Esophagus squamous epithelium (tissue), 5 donors: ENCODE measurements at regions of chr20 and their contacts with region 1.

Region 1: DNA sequence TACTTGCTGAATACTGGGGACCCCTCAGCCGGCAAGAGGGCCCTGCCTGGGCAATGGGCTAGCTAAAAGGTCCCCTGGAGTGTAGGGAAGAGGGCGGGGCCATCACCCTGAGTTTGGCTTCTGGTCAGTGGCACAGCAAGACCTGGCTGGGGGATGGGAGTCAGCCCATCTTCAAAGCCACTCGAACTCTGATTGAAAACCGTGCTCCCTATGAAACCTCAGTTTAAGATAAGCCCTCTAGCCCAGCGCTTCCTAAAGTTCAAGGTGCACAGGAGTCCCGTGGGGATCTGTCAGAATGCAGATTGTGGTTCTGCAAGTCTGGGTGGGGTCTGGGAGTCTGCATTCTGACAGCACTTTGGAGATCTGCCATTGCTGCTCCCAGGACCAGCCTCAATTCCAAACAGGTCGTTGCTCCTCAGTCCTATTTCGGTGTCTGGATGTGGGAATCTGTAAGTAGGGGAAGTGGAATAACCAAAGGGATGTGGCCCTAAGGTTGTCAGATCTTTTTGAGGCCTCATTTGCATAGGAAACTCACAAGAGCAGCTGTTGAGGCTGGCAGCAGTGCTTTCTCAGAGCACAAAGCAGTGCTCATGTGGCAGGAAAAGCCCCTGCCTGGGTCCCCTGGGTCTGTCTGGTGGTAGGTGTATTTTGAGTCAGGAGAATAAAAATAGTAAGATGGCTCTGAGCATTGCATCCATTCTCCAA is 85.3 kb upstream of the SCP2D1 start:
- DNase-seq: no peak
- H3K4me3 ChIP-seq: no peak overlapping the region
- H3K27ac ChIP-seq: no peak overlapping the region
- H3K4me1 ChIP-seq: peaks cover 0 to 18% (median 0%) of the 10 kb centered on the region in 3 donors
- H3K27me3 ChIP-seq: no peaks in the 10 kb centered on the region
- CTCF ChIP-seq: no peak
- POLR2A ChIP-seq: no peak

Region 2: DNA sequence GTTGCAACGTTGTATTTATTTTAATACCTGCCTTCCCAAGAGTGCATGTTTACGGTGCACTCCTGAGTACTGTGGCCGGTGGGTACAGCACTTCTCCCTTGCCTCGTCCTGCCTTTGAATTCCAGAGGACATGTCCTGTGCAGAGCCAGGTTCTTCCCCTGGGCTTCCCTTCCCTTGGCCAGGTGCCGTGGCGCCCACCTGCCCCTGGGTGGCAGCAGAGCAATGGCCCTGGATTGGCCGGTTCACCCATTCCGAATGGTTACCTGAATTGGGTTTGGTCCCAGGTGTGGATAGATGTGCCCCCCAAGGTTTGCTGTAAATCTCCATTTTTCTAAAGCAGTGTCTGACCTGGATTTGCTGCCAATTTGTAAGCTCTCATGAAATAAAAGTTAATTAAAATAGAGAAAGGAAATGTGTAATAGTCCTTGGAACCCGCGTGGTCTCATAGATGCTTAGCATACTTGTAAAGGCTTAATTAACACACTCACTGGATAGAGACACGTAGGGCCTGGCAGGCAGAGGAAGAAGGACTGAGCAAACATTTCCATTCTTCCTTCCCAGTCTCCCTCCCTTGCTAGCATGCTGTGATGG is 99.9 kb before region 1 on chr20:
- intact Hi-C with region 1: no loop called
- DNase-seq: no peak
- H3K4me3 ChIP-seq: no peak overlapping the region
- H3K27ac ChIP-seq: no peak overlapping the region
- H3K4me1 ChIP-seq: peaks cover 0 to 5% (median 0%) of the 10 kb centered on the region in 3 donors
- H3K27me3 ChIP-seq: no peaks in the 10 kb centered on the region
- CTCF ChIP-seq: peak in 5 of 6 experiments; percentile 37 to 72 (median 43)
- POLR2A ChIP-seq: no peak

Region 3: DNA sequence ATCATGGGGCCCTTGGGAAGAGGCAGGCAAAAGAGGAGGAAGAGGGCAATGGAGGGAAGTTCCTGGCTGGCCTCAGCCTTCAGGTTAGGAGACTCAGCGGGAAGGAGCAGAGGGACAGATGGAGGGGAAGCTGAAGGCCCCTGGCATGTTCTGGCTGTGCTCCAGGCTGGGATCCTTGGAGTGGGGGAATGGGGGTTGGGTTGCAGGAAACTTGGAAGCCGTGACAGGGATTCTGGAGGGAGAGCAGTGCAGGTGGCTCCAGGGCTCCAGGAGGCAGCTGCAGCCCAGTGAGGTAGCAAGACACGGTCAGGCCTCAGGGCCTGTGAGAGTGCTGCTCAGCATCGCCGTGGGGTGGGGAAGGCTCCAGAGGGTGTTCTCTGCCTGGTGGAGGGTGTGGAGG is 20.7 kb after region 1 on chr20:
- intact Hi-C with region 1: loop called (anchors 2 kb)
- DNase-seq: no peak
- H3K4me3 ChIP-seq: no peak overlapping the region
- H3K27ac ChIP-seq: no peak overlapping the region
- H3K4me1 ChIP-seq: no peaks in the 10 kb centered on the region
- H3K27me3 ChIP-seq: no peaks in the 10 kb centered on the region
- CTCF ChIP-seq: no peak
- POLR2A ChIP-seq: no peak